ENCODE measurements at regions of chr15 and their contacts with region 1.

Region 1: GRCh38 chr15:59160880-59161593 is 45.6 kb upstream of the LDHAL6B start:
- DNase-seq: peak; percentile 42
- H3K4me3 Mint-ChIP-seq: no peak overlapping the region
- H3K27ac Mint-ChIP-seq: no peak overlapping the region
- H3K4me1 Mint-ChIP-seq: peaks cover 11% of the 10 kb centered on the region
- H3K27me3 Mint-ChIP-seq: no peaks in the 10 kb centered on the region

Region 2: GRCh38 chr15:59174835-59175831 is 14.1 kb after region 1 on chr15:
- CTCF ChIA-PET with region 1: interaction called, 11 read pairs
- POLR2A ChIA-PET with region 1: interaction called, 3 read pairs
- DNase-seq: peak; percentile 59
- H3K4me3 Mint-ChIP-seq: no peak overlapping the region
- H3K27ac Mint-ChIP-seq: no peak overlapping the region
- H3K4me1 Mint-ChIP-seq: peaks cover 18% of the 10 kb centered on the region
- H3K27me3 Mint-ChIP-seq: peaks cover 7% of the 10 kb centered on the region

Region 3: DNA sequence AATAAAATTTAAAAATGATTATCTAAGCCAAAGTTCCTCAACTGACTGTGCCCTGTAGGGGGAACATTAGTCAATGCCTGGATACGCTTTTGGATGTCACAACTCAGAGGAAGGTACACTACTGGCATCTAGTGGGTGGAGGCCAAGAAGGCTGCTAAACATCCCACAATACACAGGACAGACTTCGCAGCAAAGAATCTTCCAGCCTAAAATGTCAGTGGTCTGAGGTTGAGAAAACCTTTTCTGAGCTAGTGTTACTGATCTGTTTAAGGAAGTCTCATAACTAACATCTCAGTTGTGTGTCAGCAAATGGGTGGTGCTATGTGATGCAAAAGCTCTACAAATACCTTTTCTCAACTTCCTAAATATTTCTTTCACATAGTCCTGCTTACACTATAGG is 24.7 kb after region 1 on chr15:
- CTCF ChIA-PET with region 1: no interaction called
- POLR2A ChIA-PET with region 1: no interaction called
- DNase-seq: no peak
- H3K4me3 Mint-ChIP-seq: no peak overlapping the region
- H3K27ac Mint-ChIP-seq: no peak overlapping the region
- H3K4me1 Mint-ChIP-seq: no peaks in the 10 kb centered on the region
- H3K27me3 Mint-ChIP-seq: peaks cover 8% of the 10 kb centered on the region

Region 4: GRCh38 chr15:59221511-59222505 is 60.8 kb after region 1 on chr15:
- CTCF ChIA-PET with region 1: no interaction called
- POLR2A ChIA-PET with region 1: no interaction called
- DNase-seq: no peak
- H3K4me3 Mint-ChIP-seq: no peak overlapping the region
- H3K27ac Mint-ChIP-seq: no peak overlapping the region
- H3K4me1 Mint-ChIP-seq: peaks cover 11% of the 10 kb centered on the region
- H3K27me3 Mint-ChIP-seq: peaks cover 7% of the 10 kb centered on the region